Tibial artery (tissue), 4 donors: ENCODE measurements at regions of chr19 and their contacts with region 1.

Region 1: GRCh38 chr19:47786566-47786965 is 8.1 kb downstream of the SELENOW start:
- DNase-seq: no peak
- H3K4me3 ChIP-seq: no peak overlapping the region
- H3K27ac ChIP-seq: peak overlapping the region in 1 of 2 donors; percentile 34
- H3K4me1 ChIP-seq: peaks cover 0 to 27% (median 21%) of the 10 kb centered on the region in 4 donors
- H3K27me3 ChIP-seq: no peaks in the 10 kb centered on the region
- CTCF ChIP-seq: no peak

Region 2: DNA sequence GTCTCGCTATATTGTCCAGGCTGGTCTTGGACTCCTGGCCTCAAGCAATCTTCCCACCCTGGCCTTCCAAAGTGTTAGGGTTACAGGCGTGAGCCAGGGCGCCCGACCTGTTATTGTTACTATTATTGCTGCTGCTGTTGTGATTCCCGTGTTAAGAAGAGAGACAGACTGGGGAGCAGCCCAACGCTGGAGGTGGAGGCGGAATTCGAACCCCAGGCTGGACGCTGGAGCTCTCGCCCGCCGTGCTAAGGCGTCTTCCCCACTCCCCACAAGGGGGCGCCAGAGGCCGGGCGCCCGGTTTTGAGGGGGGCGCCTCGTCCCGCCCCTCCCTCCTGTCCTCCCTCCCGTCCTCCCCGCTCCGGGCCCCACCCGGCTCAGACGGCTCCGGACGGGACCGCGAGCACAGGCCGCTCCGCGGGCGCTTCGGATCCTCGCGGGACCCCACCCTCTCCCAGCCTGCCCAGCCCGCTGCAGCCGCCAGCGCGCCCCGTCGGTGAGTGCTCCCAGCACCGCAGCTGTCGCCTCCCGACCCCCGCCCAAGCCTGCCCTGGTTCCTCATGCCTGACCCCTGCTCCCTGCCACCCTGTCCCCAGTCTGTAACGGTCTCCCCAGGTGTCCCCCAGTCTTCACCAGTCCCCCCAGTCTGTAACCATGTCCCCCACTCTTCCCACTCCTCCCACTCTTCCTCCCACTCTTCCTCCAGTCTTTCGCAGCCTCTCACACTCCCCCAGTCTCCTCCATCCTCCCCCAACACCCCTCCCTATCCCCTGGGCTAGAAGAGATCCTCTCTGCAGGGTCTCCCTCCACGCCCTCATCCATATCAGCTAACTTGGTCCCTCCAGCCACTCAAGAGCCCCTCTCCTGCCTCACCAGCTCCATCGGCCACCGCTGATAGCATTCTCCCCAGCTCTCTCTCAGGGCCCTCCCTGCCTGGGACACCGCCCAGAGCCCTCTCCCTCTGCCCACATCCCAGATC is 73.2 kb before region 1 on chr19 and contains the start of gene EHD2:
- intact Hi-C with region 1: loop called (anchors 5 kb)
- DNase-seq: peak; percentile 61 to 90
- H3K4me3 ChIP-seq: peak within 1 kb of the TSS; percentile 85 to 92
- H3K27ac ChIP-seq: peak within 1 kb of the TSS; percentile 91 to 93
- H3K4me1 ChIP-seq: peaks cover 5 to 44% (median 38%) of the 10 kb centered on the region in 4 donors
- H3K27me3 ChIP-seq: no peaks in the 10 kb centered on the region
- CTCF ChIP-seq: peak; percentile 98 to 99

Region 3: DNA sequence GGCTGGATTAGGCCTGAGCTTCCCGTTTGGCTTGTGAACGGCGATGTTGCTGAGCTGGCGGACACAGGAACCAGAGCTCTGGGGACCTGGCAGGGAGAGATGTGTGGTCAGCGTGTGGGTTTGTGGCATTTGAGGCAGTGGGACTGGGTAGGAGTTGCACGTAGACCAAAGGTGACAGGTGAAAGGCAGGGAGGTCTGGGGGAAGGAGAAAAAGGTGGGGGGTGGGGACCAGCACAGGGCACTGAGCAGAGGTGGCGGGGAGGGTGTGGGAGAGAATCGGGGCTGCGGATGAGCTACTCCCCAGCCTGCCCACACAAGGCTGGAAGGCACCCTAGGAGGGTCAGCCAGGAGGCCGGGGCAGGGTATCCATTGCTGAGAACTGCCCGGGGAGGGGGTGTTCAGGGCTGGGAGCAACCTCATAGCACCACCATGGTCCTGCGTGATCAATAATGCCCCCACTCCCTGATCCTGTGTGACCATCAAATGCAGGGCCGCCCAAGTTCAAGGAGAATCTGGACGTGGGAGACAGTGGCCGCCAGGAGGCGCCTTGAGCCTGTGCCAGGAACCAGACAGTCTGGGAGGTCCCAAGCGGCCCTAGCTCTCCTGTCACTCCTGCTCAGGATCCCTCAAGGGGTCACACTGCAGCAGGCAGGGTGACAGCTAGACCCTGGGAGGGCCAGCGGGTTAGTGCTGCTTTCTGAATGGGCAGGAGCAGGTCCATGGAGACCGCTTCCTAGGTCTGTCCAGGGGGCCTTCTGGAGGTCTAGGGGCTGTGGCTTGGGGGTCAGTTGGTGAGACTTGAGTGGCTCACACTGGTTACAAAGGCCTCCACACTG is 20.8 kb before region 1 on chr19:
- intact Hi-C with region 1: loop called (anchors 2 kb)
- DNase-seq: peak in 1 of 2 donors; percentile 79
- H3K4me3 ChIP-seq: no peak overlapping the region
- H3K27ac ChIP-seq: no peak overlapping the region
- H3K4me1 ChIP-seq: peaks cover 0 to 7% (median 0%) of the 10 kb centered on the region in 4 donors
- H3K27me3 ChIP-seq: no peaks in the 10 kb centered on the region
- CTCF ChIP-seq: peak; percentile 77 to 84